Endothelial cell of umbilical vein (primary cell): ENCODE measurements at regions of chr2 and their contacts with region 1.

Region 1: GRCh38 chr2:74334931-74335333 is 8.3 kb downstream of the SLC4A5 start:
- DNase-seq: peak; percentile 70
- H3K4me3 ChIP-seq: no peak overlapping the region
- H3K27ac ChIP-seq: no peak overlapping the region
- H3K4me1 ChIP-seq: no peaks in the 10 kb centered on the region
- H3K27me3 ChIP-seq: peaks cover 0 to 2% of the 10 kb centered on the region in 2 experiments
- CTCF ChIP-seq: peak; percentile 88 to 95
- POLR2A ChIP-seq: no peak

Region 2: DNA sequence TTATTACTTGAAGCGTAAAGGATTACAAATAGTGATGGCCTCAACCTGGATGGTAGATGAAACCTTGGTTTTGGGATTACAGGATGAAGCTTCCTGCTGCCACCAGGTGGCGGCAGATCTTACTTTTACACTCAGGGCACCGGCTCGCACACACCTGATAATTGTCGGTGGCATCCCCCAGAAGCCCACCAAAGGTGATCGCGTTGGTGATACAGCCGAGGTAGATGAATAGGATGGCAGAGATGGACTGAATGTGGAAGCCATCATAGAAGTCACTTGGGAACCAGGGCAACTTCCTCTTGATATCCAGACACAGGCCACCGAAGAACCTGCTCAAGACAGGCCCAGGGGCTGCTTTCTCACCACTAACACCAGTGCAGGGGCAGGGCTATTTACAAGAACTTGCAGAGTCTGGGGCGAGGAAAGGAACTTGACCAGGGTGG is 84.7 kb before region 1 on chr2:
- CTCF ChIA-PET with region 1: interaction called, 81 read pairs
- POLR2A ChIA-PET with region 1: no interaction called
- dilution Hi-C with region 1: no loop called
- intact Hi-C with region 1: loop called (anchors 1 kb)
- DNase-seq: peak; percentile 37
- H3K4me3 ChIP-seq: no peak overlapping the region
- H3K27ac ChIP-seq: no peak overlapping the region
- H3K4me1 ChIP-seq: no peaks in the 10 kb centered on the region
- H3K27me3 ChIP-seq: peaks cover 0 to 2% of the 10 kb centered on the region in 2 experiments
- CTCF ChIP-seq: peak; percentile 61 to 77
- POLR2A ChIP-seq: no peak

Region 3: DNA sequence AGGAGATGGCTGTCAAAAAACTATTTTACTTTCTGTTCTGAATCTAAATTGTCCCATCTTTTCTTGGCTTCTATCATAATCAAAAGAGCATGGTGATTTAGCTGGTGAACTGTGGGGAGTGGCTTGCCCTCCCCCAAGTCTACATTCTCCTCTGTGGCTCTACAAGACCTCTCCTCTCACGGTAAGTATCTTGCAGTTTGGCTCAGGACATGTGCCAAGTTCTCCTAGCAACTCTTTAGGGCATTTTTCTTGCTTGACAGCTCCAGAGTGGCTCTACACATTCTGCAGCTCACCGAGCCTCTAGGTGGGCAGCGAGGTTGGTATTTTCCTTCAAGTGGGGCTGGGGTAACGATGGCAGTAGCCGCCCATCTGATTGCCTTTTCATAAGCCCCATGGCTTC is 20.8 kb before region 1 on chr2:
- CTCF ChIA-PET with region 1: interaction called, 16 read pairs
- POLR2A ChIA-PET with region 1: no interaction called
- dilution Hi-C with region 1: no loop called
- intact Hi-C with region 1: no loop called
- DNase-seq: no peak
- H3K4me3 ChIP-seq: no peak overlapping the region
- H3K27ac ChIP-seq: no peak overlapping the region
- H3K4me1 ChIP-seq: no peaks in the 10 kb centered on the region
- H3K27me3 ChIP-seq: peaks cover 4% of the 10 kb centered on the region in 2 experiments
- CTCF ChIP-seq: no peak
- POLR2A ChIP-seq: no peak

Region 4: GRCh38 chr2:74345272-74345943 is 10.5 kb after region 1 on chr2:
- CTCF ChIA-PET with region 1: interaction called, 53 read pairs
- POLR2A ChIA-PET with region 1: no interaction called
- dilution Hi-C with region 1: no loop called
- intact Hi-C with region 1: no loop called
- DNase-seq: no peak
- H3K4me3 ChIP-seq: no peak overlapping the region
- H3K27ac ChIP-seq: no peak overlapping the region
- H3K4me1 ChIP-seq: no peaks in the 10 kb centered on the region
- H3K27me3 ChIP-seq: peaks cover 13 to 15% of the 10 kb centered on the region in 2 experiments
- CTCF ChIP-seq: no peak
- POLR2A ChIP-seq: no peak

Region 5: GRCh38 chr2:74391580-74392448 is 56.9 kb after region 1 on chr2:
- CTCF ChIA-PET with region 1: interaction called, 16 read pairs
- POLR2A ChIA-PET with region 1: no interaction called
- dilution Hi-C with region 1: no loop called
- intact Hi-C with region 1: loop called (anchors 5 kb)
- DNase-seq: peak; percentile 95
- H3K4me3 ChIP-seq: peak overlapping the region; percentile 94 to 97 (median 96)
- H3K27ac ChIP-seq: peak overlapping the region; percentile 87
- H3K4me1 ChIP-seq: peaks cover 12% of the 10 kb centered on the region
- H3K27me3 ChIP-seq: no peaks in the 10 kb centered on the region
- CTCF ChIP-seq: peak; percentile 92 to 99
- POLR2A ChIP-seq: peak; percentile 54

Region 6: DNA sequence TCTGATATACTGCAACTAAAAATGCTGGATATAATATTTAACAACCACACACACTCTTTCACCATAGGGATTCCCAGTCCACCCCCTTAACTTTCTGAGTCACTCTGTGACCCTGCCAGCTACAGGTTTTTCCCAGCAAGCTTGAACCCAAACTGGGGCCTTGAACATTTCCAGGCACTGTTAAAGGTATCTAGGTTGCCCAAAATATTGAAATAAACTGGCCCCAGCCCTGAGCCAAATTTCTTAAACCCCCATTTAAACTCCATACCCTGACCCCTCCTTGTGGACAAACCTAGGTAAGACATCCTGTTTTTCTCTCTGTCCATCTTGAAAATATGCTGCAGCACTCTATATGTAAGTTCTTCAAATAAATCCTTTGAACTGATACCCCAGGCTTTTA is 64.9 kb after region 1 on chr2:
- CTCF ChIA-PET with region 1: interaction called, 18 read pairs
- POLR2A ChIA-PET with region 1: no interaction called
- dilution Hi-C with region 1: no loop called
- intact Hi-C with region 1: loop called (anchors 5 kb)
- DNase-seq: peak; percentile 41
- H3K4me3 ChIP-seq: no peak overlapping the region
- H3K27ac ChIP-seq: no peak overlapping the region
- H3K4me1 ChIP-seq: no peaks in the 10 kb centered on the region
- H3K27me3 ChIP-seq: peaks cover 0 to 2% of the 10 kb centered on the region in 2 experiments
- CTCF ChIP-seq: peak; percentile 42 to 53
- POLR2A ChIP-seq: no peak

Region 7: GRCh38 chr2:74587664-74588277 is 252.8 kb after region 1 on chr2:
- CTCF ChIA-PET with region 1: interaction called, 8 read pairs
- POLR2A ChIA-PET with region 1: no interaction called
- dilution Hi-C with region 1: no loop called
- intact Hi-C with region 1: loop called (anchors 5 kb)
- DNase-seq: peak; percentile 73
- H3K4me3 ChIP-seq: no peak overlapping the region
- H3K27ac ChIP-seq: no peak overlapping the region
- H3K4me1 ChIP-seq: no peaks in the 10 kb centered on the region
- H3K27me3 ChIP-seq: peaks cover 21 to 38% of the 10 kb centered on the region in 2 experiments
- CTCF ChIP-seq: peak; percentile 51 to 54
- POLR2A ChIP-seq: no peak